Activated naive CD4-positive, alpha-beta T cell treated with anti-CD3 and anti-CD28 coated beads for 36 hours (primary cell): ENCODE measurements at regions of chr2 and their contacts with region 1.

Region 1: DNA sequence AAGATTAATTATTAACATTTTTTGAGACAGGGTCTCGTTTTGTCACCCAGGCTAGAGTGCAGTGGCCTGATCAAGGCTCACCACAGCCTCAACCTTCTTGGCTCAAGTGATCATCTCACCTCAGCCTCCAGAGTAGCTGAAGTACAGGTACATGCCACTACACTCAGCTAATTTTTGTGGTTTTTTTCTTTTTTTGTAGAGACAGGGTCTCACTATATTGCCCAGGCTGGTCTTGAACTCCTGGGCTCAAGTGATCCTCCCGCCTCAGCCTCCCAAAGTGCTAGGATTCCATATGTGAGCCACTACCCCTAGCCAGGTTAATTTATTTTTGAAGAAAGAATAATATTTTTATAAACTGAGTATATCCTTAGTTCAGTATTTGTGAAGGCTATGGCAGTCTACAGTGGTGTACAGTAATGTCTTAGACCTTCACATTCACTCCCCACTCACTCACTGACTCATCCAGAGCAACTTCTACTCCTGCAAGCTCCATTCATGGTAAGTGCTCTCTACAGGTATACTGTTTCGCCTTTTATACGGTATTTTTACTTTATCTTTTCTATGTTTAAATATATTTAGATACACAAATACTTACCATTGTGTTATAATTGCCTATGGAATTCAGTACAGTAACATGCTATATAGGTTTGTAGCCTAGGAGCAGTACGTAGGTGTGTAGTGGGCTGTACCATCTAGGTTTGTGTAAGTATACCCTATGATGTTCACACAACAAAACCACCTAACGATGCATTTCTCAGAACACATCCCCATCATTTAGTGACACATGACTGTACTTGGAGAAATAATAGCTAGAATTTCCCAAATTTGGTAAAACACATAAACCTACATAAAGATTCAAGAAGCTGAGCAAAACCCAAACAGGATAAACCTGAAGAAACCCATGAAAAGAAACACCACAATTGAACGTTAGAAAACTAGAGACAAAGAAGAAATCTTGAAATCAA is 38.6 kb downstream of the MGAT4A start:
- DNase-seq: peak; percentile 39
- H3K4me3 Mint-ChIP-seq: peak overlapping the region; percentile 67
- H3K27ac Mint-ChIP-seq: peak overlapping the region; percentile 97
- H3K4me1 Mint-ChIP-seq: peaks cover 83% of the 10 kb centered on the region
- H3K27me3 Mint-ChIP-seq: no peaks in the 10 kb centered on the region

Region 2: GRCh38 chr2:98643501-98644100 is 48.8 kb before region 1 on chr2:
- CTCF ChIA-PET with region 1: no interaction called
- intact Hi-C with region 1: no loop called
- DNase-seq: no peak
- H3K4me3 Mint-ChIP-seq: no peak overlapping the region
- H3K27ac Mint-ChIP-seq: peak overlapping the region; percentile 55
- H3K4me1 Mint-ChIP-seq: peaks cover 5% of the 10 kb centered on the region
- H3K27me3 Mint-ChIP-seq: no peaks in the 10 kb centered on the region

Region 3: DNA sequence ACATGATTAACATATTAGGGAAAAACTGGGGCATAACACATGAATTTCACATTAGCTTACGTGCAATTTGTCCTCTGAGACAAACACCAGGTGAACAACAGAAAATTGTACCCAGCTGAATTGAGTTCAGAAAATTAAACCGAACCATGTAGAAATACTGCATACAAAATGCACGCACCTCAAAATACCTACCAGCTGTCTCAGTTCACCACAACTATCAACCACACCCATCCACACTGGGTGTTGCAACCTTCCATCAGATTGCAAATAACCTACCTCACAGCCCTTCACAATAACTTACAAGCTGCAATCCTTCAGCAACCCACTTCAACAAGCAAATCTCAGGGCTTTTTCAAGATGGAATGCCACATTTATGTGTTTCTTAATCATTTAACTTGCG is 28.0 kb before region 1 on chr2:
- CTCF ChIA-PET with region 1: interaction called, 6 read pairs
- intact Hi-C with region 1: loop called (anchors 1 kb)
- DNase-seq: peak; percentile 78
- H3K4me3 Mint-ChIP-seq: peak overlapping the region; percentile 52
- H3K27ac Mint-ChIP-seq: peak overlapping the region; percentile 95
- H3K4me1 Mint-ChIP-seq: peaks cover 77% of the 10 kb centered on the region
- H3K27me3 Mint-ChIP-seq: no peaks in the 10 kb centered on the region

Region 4: GRCh38 chr2:98713332-98714015 is 21.1 kb after region 1 on chr2:
- CTCF ChIA-PET with region 1: interaction called, 5 read pairs
- intact Hi-C with region 1: loop called (anchors 1 kb)
- DNase-seq: no peak
- H3K4me3 Mint-ChIP-seq: no peak overlapping the region
- H3K27ac Mint-ChIP-seq: peak overlapping the region; percentile 12
- H3K4me1 Mint-ChIP-seq: peaks cover 94% of the 10 kb centered on the region
- H3K27me3 Mint-ChIP-seq: no peaks in the 10 kb centered on the region

Region 5: GRCh38 chr2:98736464-98736889 is 44.1 kb after region 1 on chr2:
- CTCF ChIA-PET with region 1: interaction called, 10 read pairs
- intact Hi-C with region 1: loop called (anchors 1 kb)
- DNase-seq: peak; percentile 65
- H3K4me3 Mint-ChIP-seq: peak overlapping the region; percentile 25
- H3K27ac Mint-ChIP-seq: peak overlapping the region; percentile 41
- H3K4me1 Mint-ChIP-seq: peaks cover 75% of the 10 kb centered on the region
- H3K27me3 Mint-ChIP-seq: no peaks in the 10 kb centered on the region

Region 6: DNA sequence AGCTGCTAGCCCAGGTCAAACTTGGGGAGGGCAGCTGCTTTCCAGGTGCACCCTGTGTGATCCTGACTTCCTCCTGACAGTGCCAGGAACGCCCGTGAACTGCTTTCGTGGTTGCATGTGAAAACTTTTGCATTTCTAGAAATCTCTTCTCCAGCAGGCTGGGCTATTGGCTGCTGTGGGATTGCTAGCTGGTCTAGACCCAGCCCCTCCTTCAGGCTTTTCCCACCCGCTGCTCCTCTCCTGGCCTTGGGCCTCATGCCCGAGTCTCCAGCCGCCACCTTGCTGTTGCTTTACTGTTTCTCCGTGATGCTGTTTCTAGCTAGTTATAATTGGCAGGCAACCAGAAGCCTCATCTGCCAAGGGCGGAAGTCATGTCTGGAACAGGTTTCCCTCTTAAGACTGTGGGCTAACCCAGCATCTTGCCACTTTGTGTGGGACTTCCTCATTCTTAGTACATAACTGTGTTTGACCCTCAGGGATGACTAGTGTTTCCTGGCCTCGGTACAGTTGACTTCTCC is 65.6 kb after region 1 on chr2:
- CTCF ChIA-PET with region 1: no interaction called
- intact Hi-C with region 1: loop called (anchors 2 kb)
- DNase-seq: peak; percentile 76
- H3K4me3 Mint-ChIP-seq: peak overlapping the region; percentile 59
- H3K27ac Mint-ChIP-seq: peak overlapping the region; percentile 86
- H3K4me1 Mint-ChIP-seq: peaks cover 52% of the 10 kb centered on the region
- H3K27me3 Mint-ChIP-seq: no peaks in the 10 kb centered on the region